B cell (primary cell): ENCODE measurements at regions of chr7 and their contacts with region 1.

Region 1: GRCh38 chr7:155003376-155004214 is 671 bp upstream of the PAXIP1 start:
- DNase-seq: no peak
- ATAC-seq: peak; percentile 86
- H3K4me3 ChIP-seq: peak overlapping the region; percentile 57 to 98 (median 89)
- H3K4me3 Mint-ChIP-seq: peak overlapping the region; percentile 95
- H3K27ac ChIP-seq: peak overlapping the region; percentile 58 to 80
- H3K27ac Mint-ChIP-seq: peak overlapping the region; percentile 93
- H3K4me1 ChIP-seq: peaks cover 14 to 18% of the 10 kb centered on the region in 2 donors
- H3K4me1 Mint-ChIP-seq: peaks cover 15% of the 10 kb centered on the region
- H3K27me3 ChIP-seq: no peaks in the 10 kb centered on the region
- H3K27me3 Mint-ChIP-seq: no peaks in the 10 kb centered on the region
- CTCF ChIP-seq: no peak

Region 2: DNA sequence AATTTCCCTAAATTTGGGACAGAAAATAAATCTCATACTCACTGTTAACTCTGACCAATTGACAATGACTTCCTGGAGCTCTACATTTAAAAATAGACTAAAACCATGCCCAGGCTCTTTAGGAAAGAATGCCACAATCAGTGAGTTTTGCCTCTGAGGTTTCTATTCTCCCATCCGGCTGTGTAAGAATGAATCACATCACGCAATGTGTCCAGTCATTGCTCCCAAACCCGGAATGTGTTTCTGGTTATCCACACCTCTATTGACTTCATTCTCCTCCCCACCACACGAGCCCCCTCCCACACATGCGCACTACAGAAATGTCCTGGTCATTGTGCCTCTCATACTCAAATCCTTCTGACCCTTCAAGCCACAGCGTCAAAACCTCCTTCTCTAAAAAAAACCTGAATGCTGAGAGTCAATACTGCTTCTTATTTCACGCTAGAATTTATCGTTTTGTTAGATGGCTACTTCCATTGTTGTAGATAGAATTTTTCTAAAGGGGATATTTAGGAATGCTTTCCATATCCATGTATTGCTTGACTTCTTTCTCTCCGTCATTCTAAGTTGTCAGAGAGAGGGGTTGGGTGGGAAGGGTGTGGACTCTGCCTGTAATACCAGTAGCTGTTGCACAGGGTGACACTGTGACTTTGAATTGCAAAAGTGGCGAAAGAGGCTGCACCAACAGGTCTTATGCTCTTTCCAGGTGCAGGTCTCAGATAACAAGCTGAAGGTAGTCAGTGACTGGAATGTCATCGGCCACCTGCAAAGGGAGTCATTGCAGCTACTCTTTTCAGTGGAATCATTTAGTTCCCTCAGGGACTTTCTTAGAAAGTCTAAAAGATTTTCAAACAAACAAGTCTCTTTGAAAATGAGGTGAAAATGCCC is 357.2 kb before region 1 on chr7:
- CTCF ChIA-PET with region 1: no interaction called
- POLR2A ChIA-PET with region 1: no interaction called
- intact Hi-C with region 1: no loop called
- DNase-seq: no peak
- ATAC-seq: no peak
- H3K4me3 ChIP-seq: no peak overlapping the region
- H3K4me3 Mint-ChIP-seq: no peak overlapping the region
- H3K27ac ChIP-seq: no peak overlapping the region
- H3K27ac Mint-ChIP-seq: no peak overlapping the region
- H3K4me1 ChIP-seq: no peaks in the 10 kb centered on the region
- H3K4me1 Mint-ChIP-seq: no peaks in the 10 kb centered on the region
- H3K27me3 ChIP-seq: no peaks in the 10 kb centered on the region
- H3K27me3 Mint-ChIP-seq: no peaks in the 10 kb centered on the region
- CTCF ChIP-seq: no peak

Region 3: DNA sequence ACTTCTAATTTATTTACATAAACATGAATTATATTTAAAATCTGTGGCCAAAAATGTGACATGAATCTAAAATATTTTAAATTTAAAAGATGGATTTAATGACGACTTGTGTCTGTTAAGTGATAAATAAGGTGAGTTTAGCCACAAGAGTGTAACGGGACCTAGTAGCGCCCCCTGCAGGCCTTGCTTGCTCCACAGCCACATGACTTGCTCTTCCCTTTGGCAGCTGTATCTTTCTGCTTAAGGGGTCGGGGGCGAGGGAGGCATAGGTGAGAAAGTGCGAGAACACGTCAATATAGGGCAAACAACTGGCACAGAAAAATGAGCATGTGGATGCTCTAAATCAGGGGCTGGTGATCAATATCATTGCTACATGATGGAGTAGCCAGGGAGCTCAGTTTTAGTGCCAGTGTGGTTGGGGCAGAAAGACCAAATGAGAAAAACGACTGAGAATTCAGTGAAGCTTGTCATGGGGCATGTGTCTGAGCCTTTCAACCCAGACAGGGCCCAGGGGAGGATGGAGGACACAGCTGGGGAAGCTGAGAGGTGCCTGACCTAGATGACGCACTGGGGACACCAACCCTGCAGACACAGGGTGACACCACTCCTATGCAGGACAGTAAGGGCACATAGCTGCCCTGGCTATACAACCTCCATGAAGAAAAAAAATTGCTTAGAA is 50.5 kb before region 1 on chr7:
- CTCF ChIA-PET with region 1: interaction called, 5 read pairs
- POLR2A ChIA-PET with region 1: no interaction called
- intact Hi-C with region 1: loop called (anchors 10 kb)
- DNase-seq: peak; percentile 62
- ATAC-seq: no peak
- H3K4me3 ChIP-seq: no peak overlapping the region
- H3K4me3 Mint-ChIP-seq: no peak overlapping the region
- H3K27ac ChIP-seq: no peak overlapping the region
- H3K27ac Mint-ChIP-seq: no peak overlapping the region
- H3K4me1 ChIP-seq: no peaks in the 10 kb centered on the region
- H3K4me1 Mint-ChIP-seq: no peaks in the 10 kb centered on the region
- H3K27me3 ChIP-seq: no peaks in the 10 kb centered on the region
- H3K27me3 Mint-ChIP-seq: no peaks in the 10 kb centered on the region
- CTCF ChIP-seq: peak; percentile 69

Region 4: DNA sequence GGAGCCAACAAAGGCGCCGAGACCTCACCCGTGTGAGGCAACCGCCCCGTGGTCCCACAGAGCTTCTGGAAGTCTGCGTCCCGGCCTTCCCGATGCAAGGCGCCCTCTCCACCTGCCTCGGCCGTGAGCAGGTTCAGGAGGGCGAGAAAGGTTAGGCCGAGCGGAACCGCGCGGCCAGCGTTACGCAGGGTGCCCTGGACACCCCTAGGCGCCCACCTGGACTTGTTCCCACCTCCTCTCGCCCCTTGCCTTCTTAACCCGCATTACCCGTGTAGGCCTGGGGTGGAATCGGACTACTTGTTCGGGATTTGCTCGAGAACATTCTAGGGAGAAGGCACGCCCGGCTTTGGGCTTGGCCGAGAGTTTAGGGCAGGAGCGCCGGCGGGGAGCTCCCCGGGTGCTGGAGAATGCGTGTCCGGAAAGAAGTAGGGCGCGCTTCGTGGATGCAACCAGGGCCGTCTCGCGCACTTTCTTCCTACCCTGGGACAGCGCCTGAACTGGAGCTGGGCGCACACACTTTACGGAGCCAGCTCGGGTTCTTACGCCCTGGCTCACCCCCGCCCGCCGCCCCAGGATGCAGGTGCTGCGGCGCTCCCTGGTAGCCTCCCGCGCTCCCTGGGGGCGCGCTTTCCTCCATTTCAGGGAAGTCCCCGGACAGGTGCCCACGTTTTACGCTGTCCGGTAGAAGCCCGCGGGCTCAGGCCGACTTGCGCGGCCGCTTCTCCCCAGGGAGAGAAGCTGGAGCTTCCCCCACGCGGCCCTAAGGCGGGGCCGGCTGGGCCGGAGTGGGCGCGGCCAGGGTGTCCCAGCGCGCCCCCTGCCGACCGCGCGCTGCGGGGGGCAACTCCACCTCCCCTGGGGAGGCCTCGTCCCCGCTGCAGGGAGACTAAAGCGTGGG is 368.5 kb after region 1 on chr7:
- CTCF ChIA-PET with region 1: no interaction called
- POLR2A ChIA-PET with region 1: no interaction called
- intact Hi-C with region 1: loop called (anchors 10 kb)
- DNase-seq: peak; percentile 64
- ATAC-seq: peak; percentile 68
- H3K4me3 ChIP-seq: peak overlapping the region in 4 of 5 experiments; percentile 4 to 66 (median 46)
- H3K4me3 Mint-ChIP-seq: peak overlapping the region; percentile 89
- H3K27ac ChIP-seq: no peak overlapping the region
- H3K27ac Mint-ChIP-seq: no peak overlapping the region
- H3K4me1 ChIP-seq: peaks cover 45 to 52% of the 10 kb centered on the region in 2 donors
- H3K4me1 Mint-ChIP-seq: peaks cover 34% of the 10 kb centered on the region
- H3K27me3 ChIP-seq: peaks cover 0 to 66% (median 60%) of the 10 kb centered on the region in 4 experiments
- H3K27me3 Mint-ChIP-seq: peaks cover 65% of the 10 kb centered on the region
- CTCF ChIP-seq: peak; percentile 61

Region 5: GRCh38 chr7:155644178-155644970 is 640.8 kb after region 1 on chr7 and contains the start of gene RBM33:
- CTCF ChIA-PET with region 1: no interaction called
- POLR2A ChIA-PET with region 1: no interaction called
- intact Hi-C with region 1: loop called (anchors 10 kb)
- DNase-seq: peak; percentile 93
- ATAC-seq: peak; percentile 74
- H3K4me3 ChIP-seq: peak within 1 kb of the TSS; percentile 70 to 96 (median 90)
- H3K4me3 Mint-ChIP-seq: peak within 1 kb of the TSS; percentile 92
- H3K27ac ChIP-seq: peak within 1 kb of the TSS; percentile 88 to 92
- H3K27ac Mint-ChIP-seq: peak within 1 kb of the TSS; percentile 96
- H3K4me1 ChIP-seq: peaks cover 20 to 25% of the 10 kb centered on the region in 2 donors
- H3K4me1 Mint-ChIP-seq: peaks cover 45% of the 10 kb centered on the region
- H3K27me3 ChIP-seq: no peaks in the 10 kb centered on the region
- H3K27me3 Mint-ChIP-seq: no peaks in the 10 kb centered on the region
- CTCF ChIP-seq: no peak
- total RNA-seq, gene RBM33: 185 and 189 TPM in 2 replicates